Naive thymus-derived CD8-positive, alpha-beta T cell (primary cell): ENCODE measurements at regions of chr22 and their contacts with region 1.

Region 1: GRCh38 chr22:50582562-50583293 is at the start of gene CHKB:
- DNase-seq: peak; percentile 96 to 99 (median 98)
- ATAC-seq: peak; percentile 92 to 94
- H3K4me3 Mint-ChIP-seq: peak within 1 kb of the TSS; percentile 84 to 98 (median 94)
- H3K27ac Mint-ChIP-seq: peak within 1 kb of the TSS; percentile 88 to 98 (median 96)
- H3K4me1 Mint-ChIP-seq: peaks cover 9 to 39% (median 31%) of the 10 kb centered on the region in 4 donors
- H3K27me3 Mint-ChIP-seq: no peaks in the 10 kb centered on the region
- polyA plus RNA-seq, gene CHKB: 23.0 to 26.9 (median 25.1) TPM

Region 2: GRCh38 chr22:50537765-50538164 is 45.0 kb before region 1 on chr22:
- POLR2A ChIA-PET with region 1: interaction called, 17 read pairs
- DNase-seq: no peak
- ATAC-seq: no peak
- H3K4me3 Mint-ChIP-seq: peak overlapping the region in 4 of 10 donors; percentile 11 to 65 (median 34)
- H3K27ac Mint-ChIP-seq: peak overlapping the region; percentile 63 to 100 (median 86)
- H3K4me1 Mint-ChIP-seq: peaks cover 10 to 70% (median 22%) of the 10 kb centered on the region in 4 donors
- H3K27me3 Mint-ChIP-seq: peaks cover 0 to 4% (median 0%) of the 10 kb centered on the region in 5 donors

Region 3: GRCh38 chr22:50544078-50544745 is 38.5 kb before region 1 on chr22:
- POLR2A ChIA-PET with region 1: interaction called, 17 read pairs
- DNase-seq: peak; percentile 65 to 84 (median 72)
- ATAC-seq: peak; percentile 53 to 58
- H3K4me3 Mint-ChIP-seq: peak overlapping the region; percentile 54 to 74 (median 66)
- H3K27ac Mint-ChIP-seq: peak overlapping the region in 9 of 10 donors; percentile 31 to 83 (median 73)
- H3K4me1 Mint-ChIP-seq: peaks cover 13 to 65% (median 35%) of the 10 kb centered on the region in 4 donors
- H3K27me3 Mint-ChIP-seq: no peaks in the 10 kb centered on the region

Region 4: DNA sequence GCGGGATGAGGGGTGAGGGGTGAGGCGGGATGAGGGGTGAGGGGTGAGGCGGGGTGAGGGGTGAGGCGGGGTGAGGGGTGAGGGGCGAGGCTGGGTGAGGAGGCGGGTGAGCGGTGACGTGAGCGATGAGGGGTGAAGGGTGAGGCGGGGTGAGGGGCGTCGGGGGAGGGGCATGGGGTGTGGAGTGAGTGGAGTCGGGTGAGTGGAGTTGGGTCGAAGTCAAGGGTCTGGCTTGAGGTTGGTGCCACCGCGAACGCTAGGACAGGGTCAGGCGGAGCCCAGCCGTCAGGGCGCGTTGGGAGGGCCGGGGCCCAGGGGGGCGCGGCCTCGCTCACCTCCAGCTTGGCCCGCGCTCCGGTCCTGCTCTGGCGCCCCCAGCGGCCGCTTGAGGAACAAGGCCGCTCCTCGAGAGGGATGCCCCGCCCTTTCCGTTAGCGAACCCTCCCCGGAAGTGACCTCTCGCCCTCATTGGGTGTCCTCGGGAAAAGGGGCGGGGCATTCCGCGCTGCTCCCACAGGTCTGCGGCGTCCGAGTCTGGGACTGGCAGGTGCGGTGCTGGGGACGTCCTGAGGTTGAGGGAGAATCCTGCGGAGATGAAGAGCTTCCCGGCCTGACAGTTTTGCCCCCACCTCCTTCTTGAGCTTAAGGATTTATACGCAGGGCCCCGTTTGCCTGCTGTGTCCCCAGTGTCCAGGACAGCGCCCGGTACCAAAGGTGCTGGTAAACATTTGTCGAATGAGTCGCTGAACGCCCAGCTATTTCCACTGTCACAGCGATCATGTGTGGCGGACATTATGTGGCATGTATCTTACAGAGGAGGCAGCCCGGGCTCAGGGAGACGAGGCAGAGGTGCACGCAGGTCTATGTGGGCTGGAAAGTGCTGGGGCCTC is 20.0 kb before region 1 on chr22 and contains the start of gene SYCE3:
- POLR2A ChIA-PET with region 1: interaction called, 25 read pairs
- DNase-seq: peak; percentile 93 to 99 (median 97)
- ATAC-seq: peak; percentile 95 to 98
- H3K4me3 Mint-ChIP-seq: peak within 1 kb of the TSS; percentile 91 to 98 (median 94)
- H3K27ac Mint-ChIP-seq: peak within 1 kb of the TSS; percentile 72 to 96 (median 91)
- H3K4me1 Mint-ChIP-seq: peaks cover 12 to 23% (median 17%) of the 10 kb centered on the region in 4 donors
- H3K27me3 Mint-ChIP-seq: no peaks in the 10 kb centered on the region
- polyA plus RNA-seq, gene SYCE3: not detected